Activated CD8-positive, alpha-beta T cell treated with anti-CD3 and anti-CD28 coated beads, Interleukin-2, amount 10 ng/mL, durations not matched to agents 7 days and 5 days (primary cell): ENCODE measurements at regions of chr5 and their contacts with region 1.

Region 1: GRCh38 chr5:34898258-34898895 is 16.9 kb downstream of the RAD1 start:
- DNase-seq: peak; percentile 72
- ATAC-seq: peak; percentile 77
- H3K4me3 Mint-ChIP-seq: no peak overlapping the region
- H3K27ac Mint-ChIP-seq: no peak overlapping the region
- H3K4me1 Mint-ChIP-seq: no peaks in the 10 kb centered on the region
- H3K27me3 Mint-ChIP-seq: no peaks in the 10 kb centered on the region

Region 2: DNA sequence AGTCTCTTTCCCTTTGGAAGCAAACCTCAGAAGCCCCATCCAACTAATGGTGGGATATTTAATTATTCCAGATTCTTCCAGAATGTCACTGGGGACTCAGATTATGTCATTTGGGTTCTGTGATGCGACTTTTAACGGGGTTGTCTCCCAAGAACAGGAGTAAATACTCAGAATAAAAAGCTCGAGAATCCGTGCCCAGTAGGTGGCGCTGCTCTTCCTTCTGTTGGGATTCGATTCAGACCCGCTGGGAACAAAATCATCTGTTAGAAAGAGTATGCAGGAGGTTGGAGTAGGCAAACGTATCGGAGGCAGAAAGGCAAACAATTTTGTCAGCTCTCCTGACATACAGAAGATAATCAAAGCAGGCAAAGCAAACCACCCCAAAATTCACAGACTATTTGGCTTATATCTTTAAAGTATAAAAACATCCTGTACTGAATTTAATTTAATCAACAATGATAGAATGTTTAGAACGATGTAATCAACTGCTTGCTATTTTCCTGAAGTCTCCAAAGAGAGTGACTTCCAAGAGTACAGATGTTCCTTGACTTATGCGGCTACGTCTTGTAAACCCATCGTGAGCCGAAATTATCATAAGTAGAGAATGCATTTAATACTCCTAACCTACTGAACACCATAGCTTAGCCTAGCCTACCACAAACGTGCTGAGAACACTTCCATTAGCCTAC is 412.1 kb before region 1 on chr5:
- CTCF ChIA-PET with region 1: interaction called, 23 read pairs
- POLR2A ChIA-PET with region 1: no interaction called
- DNase-seq: peak; percentile 72
- ATAC-seq: peak; percentile 53
- H3K4me3 Mint-ChIP-seq: no peak overlapping the region
- H3K27ac Mint-ChIP-seq: no peak overlapping the region
- H3K4me1 Mint-ChIP-seq: no peaks in the 10 kb centered on the region
- H3K27me3 Mint-ChIP-seq: peaks cover 21% of the 10 kb centered on the region

Region 3: GRCh38 chr5:34522599-34523386 is 375.6 kb before region 1 on chr5:
- CTCF ChIA-PET with region 1: interaction called, 32 read pairs
- POLR2A ChIA-PET with region 1: no interaction called
- DNase-seq: peak; percentile 70
- ATAC-seq: peak; percentile 86
- H3K4me3 Mint-ChIP-seq: no peak overlapping the region
- H3K27ac Mint-ChIP-seq: no peak overlapping the region
- H3K4me1 Mint-ChIP-seq: peaks cover 4% of the 10 kb centered on the region
- H3K27me3 Mint-ChIP-seq: peaks cover 4% of the 10 kb centered on the region

Region 4: GRCh38 chr5:34731435-34732232 is 166.7 kb before region 1 on chr5:
- CTCF ChIA-PET with region 1: no interaction called
- POLR2A ChIA-PET with region 1: no interaction called
- DNase-seq: no peak
- ATAC-seq: no peak
- H3K4me3 Mint-ChIP-seq: no peak overlapping the region
- H3K27ac Mint-ChIP-seq: no peak overlapping the region
- H3K4me1 Mint-ChIP-seq: no peaks in the 10 kb centered on the region
- H3K27me3 Mint-ChIP-seq: peaks cover under 1% of the 10 kb centered on the region

Region 5: DNA sequence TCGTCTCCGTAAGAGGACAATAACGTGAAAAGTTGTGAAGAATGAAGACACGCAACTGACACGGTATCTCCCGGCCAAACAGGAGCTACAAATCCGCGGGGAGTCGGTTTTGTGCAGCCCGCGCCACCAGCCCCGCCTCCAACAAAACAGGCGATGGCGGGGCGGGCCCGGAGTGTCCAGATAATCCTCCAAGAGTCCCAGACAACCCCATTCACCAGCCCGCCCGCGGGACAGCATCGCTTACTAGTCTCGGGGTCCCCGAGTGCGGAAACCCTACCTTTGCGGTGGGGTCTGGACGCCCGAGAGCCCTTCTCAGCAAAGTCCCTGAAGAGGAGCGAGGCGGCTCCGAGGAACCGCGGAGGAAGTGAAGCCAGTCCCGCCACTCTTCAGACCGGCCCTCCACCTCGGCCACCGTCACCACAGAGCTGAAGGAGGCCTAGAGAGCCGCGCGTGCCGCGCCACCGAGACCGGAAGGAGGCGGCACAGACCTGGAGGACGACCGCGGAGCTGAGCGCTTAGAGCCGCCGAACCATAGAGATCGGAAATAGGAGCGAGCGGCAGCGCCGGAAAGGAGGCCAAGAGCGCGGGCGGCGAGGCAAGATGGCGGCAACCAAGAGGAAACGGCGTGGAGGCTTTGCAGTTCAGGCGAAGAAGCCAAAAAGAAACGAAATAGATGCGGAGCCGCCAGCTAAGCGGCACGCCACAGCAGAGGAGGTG is 16.9 kb after region 1 on chr5 and contains the starts of genes BRIX1 and RAD1:
- CTCF ChIA-PET with region 1: interaction called, 13 read pairs
- POLR2A ChIA-PET with region 1: interaction called, 4 read pairs
- DNase-seq: peak; percentile 96
- ATAC-seq: peak; percentile 97
- H3K4me3 Mint-ChIP-seq: no peak within 1 kb of the TSS
- H3K27ac Mint-ChIP-seq: no peak within 1 kb of the TSS
- H3K4me1 Mint-ChIP-seq: peaks cover 40% of the 10 kb centered on the region
- H3K27me3 Mint-ChIP-seq: no peaks in the 10 kb centered on the region
- total RNA-seq, gene BRIX1: 41.6 to 46.4 TPM
- total RNA-seq, gene RAD1: 29.7 to 32.4 TPM